Activated T-helper 2 cell treated with anti-CD3 and anti-CD28 coated beads, Interferon-gamma antibody, Interleukin-2, Interleukin-4, amounts not matched to agents 10 μg/mL and 5 μg/mL and 100 μg/mL, durations not matched to agents 14 hours and 24 hours and 36 hours (primary cell): ENCODE measurements at regions of chr3 and their contacts with region 1.

Region 1: GRCh38 chr3:33798411-33799201 is at the start of gene PDCD6IP:
- DNase-seq: peak; percentile 87
- H3K4me3 Mint-ChIP-seq: peak within 1 kb of the TSS; percentile 97
- H3K27ac Mint-ChIP-seq: peak within 1 kb of the TSS; percentile 93
- H3K4me1 Mint-ChIP-seq: peaks cover 44% of the 10 kb centered on the region
- H3K27me3 Mint-ChIP-seq: peaks cover 6% of the 10 kb centered on the region
- total RNA-seq, gene PDCD6IP: 180 and 190 TPM in 2 replicates

Region 2: DNA sequence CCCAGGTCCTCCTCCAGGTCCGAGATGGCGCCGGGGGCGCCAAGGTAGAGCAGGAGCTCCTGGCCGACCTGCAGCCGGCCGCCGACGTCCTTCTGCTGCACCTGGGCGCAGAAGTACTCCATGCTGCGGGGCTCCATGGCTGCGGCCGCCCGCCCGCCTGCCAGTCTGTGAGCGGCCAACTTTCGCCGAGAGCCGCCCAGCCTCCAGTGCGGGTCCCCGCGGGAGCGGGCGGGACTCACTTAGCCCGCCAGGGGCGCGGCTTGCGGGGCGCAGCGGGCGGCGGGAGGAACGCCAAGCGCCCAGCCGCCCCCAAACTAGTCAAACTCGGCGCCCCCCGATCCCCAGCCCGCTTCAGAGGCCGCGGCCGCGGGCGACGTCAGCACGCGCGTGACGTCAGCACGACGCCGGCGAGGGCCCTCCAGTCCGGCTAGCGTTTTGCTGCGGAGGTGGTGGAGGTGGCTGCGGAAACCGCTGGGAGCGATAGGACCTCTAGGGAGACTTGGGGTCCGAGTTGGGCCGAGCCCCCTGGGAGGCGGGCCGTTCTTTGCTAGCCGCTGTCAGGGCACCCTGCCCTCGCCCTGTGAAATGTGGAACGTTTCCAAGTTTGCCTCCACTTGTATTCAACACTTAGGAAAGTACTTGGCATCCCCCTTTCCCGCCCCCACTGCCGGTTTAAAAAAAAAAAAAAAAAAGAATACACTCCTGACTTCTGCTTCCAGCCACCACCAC is 80.6 kb before region 1 on chr3 and contains the start of gene CLASP2:
- intact Hi-C with region 1: loop called (anchors 1 kb)
- DNase-seq: peak; percentile 77
- H3K4me3 Mint-ChIP-seq: peak within 1 kb of the TSS; percentile 89
- H3K27ac Mint-ChIP-seq: peak within 1 kb of the TSS; percentile 86
- H3K4me1 Mint-ChIP-seq: peaks cover 11% of the 10 kb centered on the region
- H3K27me3 Mint-ChIP-seq: peaks cover 2% of the 10 kb centered on the region
- total RNA-seq, gene CLASP2: 58.8 and 70.9 TPM in 2 replicates